Posterior cingulate gyrus (tissue), 11 donors: ENCODE measurements at regions of chr14 and their contacts with region 1.

Region 1: DNA sequence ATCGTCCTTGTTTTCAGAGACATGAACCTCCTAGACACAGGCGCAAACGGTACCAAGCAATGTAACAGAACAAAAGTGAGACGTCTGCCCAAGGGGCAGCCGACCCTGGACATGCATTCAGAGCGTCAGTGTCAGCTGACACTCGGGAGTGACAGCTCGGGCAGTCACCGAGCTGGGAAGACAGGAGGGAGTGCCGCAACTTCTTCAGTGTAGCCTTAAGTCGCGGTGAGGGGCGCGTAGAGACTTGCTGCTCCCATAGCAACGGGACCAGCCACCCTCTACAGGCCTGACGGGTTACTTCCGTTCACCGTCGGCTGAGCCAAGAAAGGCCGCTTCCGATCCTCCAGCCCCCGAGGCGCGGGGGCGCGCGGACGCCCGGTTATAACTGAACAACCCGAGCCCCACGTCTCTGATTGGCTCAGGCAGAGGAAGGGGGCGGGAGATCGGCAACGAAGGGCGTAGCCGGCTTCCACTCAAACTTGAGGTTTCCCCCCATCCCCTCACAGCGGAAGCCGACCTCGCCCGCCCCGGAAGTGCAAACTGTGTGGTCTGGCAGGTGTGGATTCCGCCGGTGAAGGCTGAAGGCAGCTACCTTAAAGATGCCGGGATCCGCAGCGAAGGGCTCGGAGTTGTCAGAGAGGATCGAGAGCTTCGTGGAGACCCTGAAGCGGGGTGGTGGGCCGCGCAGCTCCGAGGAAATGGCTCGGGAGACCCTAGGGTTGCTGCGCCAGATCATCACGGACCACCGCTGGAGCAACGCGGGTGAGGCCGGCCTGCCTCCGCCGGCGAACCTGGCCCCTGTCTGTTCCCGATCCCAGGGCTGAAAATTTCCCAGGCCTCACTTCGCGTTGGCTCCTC is at the start of gene EIF2B2:
- DNase-seq: peak; percentile 95 to 100 (median 99)

Region 2: GRCh38 chr14:74893614-74894091 is 109.0 kb before region 1 on chr14:
- intact Hi-C with region 1: no loop called
- DNase-seq: no peak

Region 3: GRCh38 chr14:74945823-74946682 is 56.6 kb before region 1 on chr14:
- intact Hi-C with region 1: loop called (anchors 5 kb)
- DNase-seq: peak; percentile 44 to 96 (median 83)

Region 4: GRCh38 chr14:75069045-75069810 is 66.6 kb after region 1 on chr14 and contains the start of gene ZC2HC1C:
- intact Hi-C with region 1: loop called (anchors 2 kb)
- DNase-seq: peak; percentile 91 to 99 (median 96)

Region 5: DNA sequence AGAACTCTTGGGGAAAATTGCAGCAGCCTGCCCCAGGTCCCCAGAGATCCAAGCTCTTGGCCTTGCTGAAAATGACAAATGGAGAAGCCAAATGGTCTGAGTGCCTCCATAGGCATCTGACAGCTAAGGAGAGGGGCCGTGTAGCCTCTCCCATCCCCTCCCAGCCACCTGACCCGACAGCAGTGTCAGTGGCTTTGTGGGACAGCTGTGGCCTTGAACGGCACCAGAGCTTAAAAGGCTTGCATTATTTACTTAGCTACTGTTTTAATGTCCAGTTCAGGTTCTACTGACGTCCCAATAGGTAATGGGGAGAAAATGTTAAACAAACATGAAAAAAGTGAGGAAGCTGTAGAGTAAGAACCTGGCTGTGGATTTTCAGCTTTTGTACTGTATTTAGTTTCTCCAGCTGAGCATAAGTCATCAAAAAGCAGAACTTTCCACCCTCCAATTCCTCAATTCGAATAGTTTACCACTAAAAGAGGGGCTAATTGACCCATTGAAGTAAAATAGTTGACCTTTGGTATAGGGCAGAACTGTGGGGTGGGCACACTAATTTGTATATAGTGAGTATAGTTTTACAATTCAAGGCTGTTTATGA is 326.0 kb after region 1 on chr14:
- intact Hi-C with region 1: no loop called
- DNase-seq: no peak